ENCODE measurements at regions of chr6 and their contacts with region 1.

Region 1: GRCh38 chr6:31042806-31043205 is 32.5 kb downstream of the MUC22 start:
- DNase-seq: peak; percentile 74
- ATAC-seq: peak; percentile 94
- H3K4me3 ChIP-seq: no peak overlapping the region
- H3K27ac ChIP-seq: no peak overlapping the region
- H3K4me1 ChIP-seq: peaks cover 0 to 8% of the 10 kb centered on the region in 2 experiments; a peak in 2 of 4 replicates
- H3K27me3 ChIP-seq: no peaks in the 10 kb centered on the region
- CTCF ChIP-seq: peak; percentile 61 to 81 (median 74); a peak in 5 of 6 replicates
- POLR2A ChIP-seq: no peak
- RAD21 ChIP-seq: peak; percentile 82

Region 2: GRCh38 chr6:30508890-30509736 is 533.7 kb before region 1 on chr6:
- CTCF ChIA-PET with region 1: no interaction called
- POLR2A ChIA-PET with region 1: no interaction called
- RAD21 ChIA-PET with region 1: no interaction called
- intact Hi-C with region 1: no loop called
- DNase-seq: no peak
- ATAC-seq: no peak
- H3K4me3 ChIP-seq: no peak overlapping the region
- H3K27ac ChIP-seq: no peak overlapping the region
- H3K4me1 ChIP-seq: peaks cover 0 to 6% of the 10 kb centered on the region in 2 experiments; a peak in 1 of 4 replicates
- H3K27me3 ChIP-seq: no peaks in the 10 kb centered on the region
- CTCF ChIP-seq: no peak
- POLR2A ChIP-seq: no peak
- RAD21 ChIP-seq: no peak

Region 3: DNA sequence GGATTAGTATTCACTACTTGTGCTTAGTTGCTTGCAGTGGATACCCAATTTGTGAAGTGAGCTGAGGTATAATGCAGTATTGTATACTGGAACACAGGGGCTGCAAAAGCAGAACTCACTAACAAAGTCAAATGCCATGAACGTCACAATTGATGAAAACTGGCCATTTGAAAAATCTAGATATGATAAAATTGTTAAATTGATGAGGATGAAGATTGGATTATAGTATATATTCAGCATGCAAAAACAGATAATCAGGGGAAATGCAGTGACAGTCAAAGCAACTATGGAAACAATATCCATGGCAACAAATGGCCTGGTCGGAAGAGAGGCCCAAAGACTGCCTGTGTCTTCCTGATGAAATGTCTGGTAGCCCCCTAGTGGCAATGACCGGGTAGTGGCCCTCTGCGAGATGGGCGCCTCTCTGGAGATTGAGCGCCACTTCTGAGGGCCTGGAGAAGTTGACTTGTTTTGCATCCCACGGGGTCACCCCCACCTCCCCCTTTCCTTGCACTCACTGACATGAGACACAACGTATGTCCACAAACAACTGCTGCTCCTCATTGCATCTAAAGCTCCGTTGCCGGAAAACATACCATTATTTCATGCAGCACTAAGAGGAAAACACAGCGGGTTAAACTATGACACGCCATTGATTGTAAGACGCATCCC is 26.0 kb after region 1 on chr6:
- CTCF ChIA-PET with region 1: interaction called, 15 read pairs
- POLR2A ChIA-PET with region 1: no interaction called
- RAD21 ChIA-PET with region 1: no interaction called
- intact Hi-C with region 1: no loop called
- DNase-seq: peak; percentile 81
- ATAC-seq: peak; percentile 94
- H3K4me3 ChIP-seq: no peak overlapping the region
- H3K27ac ChIP-seq: no peak overlapping the region
- H3K4me1 ChIP-seq: peaks cover 4 to 14% of the 10 kb centered on the region in 2 experiments; a peak in 3 of 4 replicates
- H3K27me3 ChIP-seq: no peaks in the 10 kb centered on the region
- CTCF ChIP-seq: peak; percentile 88 to 92 (median 91)
- POLR2A ChIP-seq: no peak
- RAD21 ChIP-seq: peak; percentile 82

Region 4: DNA sequence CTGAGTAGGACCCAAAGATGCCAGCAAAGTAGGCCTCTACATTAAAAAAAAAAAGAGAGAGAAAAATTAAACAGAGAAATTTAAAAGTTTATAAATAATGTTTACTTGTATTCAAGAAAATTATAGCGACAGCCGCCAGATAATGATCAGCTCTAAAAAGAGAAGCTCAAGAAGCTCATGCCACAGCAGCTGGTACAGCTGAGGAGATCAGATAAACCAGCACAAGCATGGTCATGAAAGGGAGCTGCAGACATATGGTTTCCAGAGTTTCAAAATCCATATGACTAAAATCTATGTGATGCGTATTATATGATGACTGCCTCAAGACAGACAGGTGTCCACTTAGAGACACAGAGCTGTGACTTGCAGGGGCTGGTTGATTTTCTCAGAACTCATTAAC is 242.7 kb after region 1 on chr6:
- CTCF ChIA-PET with region 1: no interaction called
- POLR2A ChIA-PET with region 1: no interaction called
- RAD21 ChIA-PET with region 1: no interaction called
- intact Hi-C with region 1: no loop called
- DNase-seq: no peak
- ATAC-seq: no peak
- H3K4me3 ChIP-seq: no peak overlapping the region
- H3K27ac ChIP-seq: no peak overlapping the region
- H3K4me1 ChIP-seq: no peaks in the 10 kb centered on the region
- H3K27me3 ChIP-seq: peaks cover 5% of the 10 kb centered on the region; the same call in 1 of the 2 replicates
- CTCF ChIP-seq: no peak
- POLR2A ChIP-seq: no peak
- RAD21 ChIP-seq: no peak